OCI-LY7 (cell line): ENCODE measurements at regions of chr17 and their contacts with region 1.

Region 1: GRCh38 chr17:69445132-69445531 is 30.6 kb downstream of the MAP2K6 start:
- DNase-seq: no peak
- H3K4me3 ChIP-seq: no peak overlapping the region
- H3K27ac ChIP-seq: no peak overlapping the region
- H3K4me1 ChIP-seq: no peaks in the 10 kb centered on the region
- CTCF ChIP-seq: no peak

Region 2: GRCh38 chr17:69430488-69430887 is 14.6 kb before region 1 on chr17:
- CTCF ChIA-PET with region 1: no interaction called
- POLR2A ChIA-PET with region 1: interaction called, 23 read pairs
- intact Hi-C with region 1: no loop called
- DNase-seq: no peak
- H3K4me3 ChIP-seq: no peak overlapping the region
- H3K27ac ChIP-seq: no peak overlapping the region
- H3K4me1 ChIP-seq: peaks cover 10% of the 10 kb centered on the region
- CTCF ChIP-seq: no peak